ENCODE measurements at regions of chr6 and their contacts with region 1.

Region 1: GRCh38 chr6:37207903-37208456 is 38.0 kb downstream of the PIM1 start:
- H3K4me3 ChIP-seq: no peak overlapping the region
- H3K27ac ChIP-seq: no peak overlapping the region
- H3K4me1 ChIP-seq: peaks cover 2% of the 10 kb centered on the region
- CTCF ChIP-seq: peak; percentile 85

Region 2: GRCh38 chr6:36885461-36886401 is 322.2 kb before region 1 on chr6 and contains the start of gene C6orf89:
- CTCF ChIA-PET with region 1: interaction called, 22 read pairs
- POLR2A ChIA-PET with region 1: no interaction called
- H3K4me3 ChIP-seq: peak within 1 kb of the TSS; percentile 81
- H3K27ac ChIP-seq: peak within 1 kb of the TSS; percentile 66
- H3K4me1 ChIP-seq: peaks cover 3% of the 10 kb centered on the region; the same call in 1 of the 2 replicates
- CTCF ChIP-seq: peak; percentile 92

Region 3: DNA sequence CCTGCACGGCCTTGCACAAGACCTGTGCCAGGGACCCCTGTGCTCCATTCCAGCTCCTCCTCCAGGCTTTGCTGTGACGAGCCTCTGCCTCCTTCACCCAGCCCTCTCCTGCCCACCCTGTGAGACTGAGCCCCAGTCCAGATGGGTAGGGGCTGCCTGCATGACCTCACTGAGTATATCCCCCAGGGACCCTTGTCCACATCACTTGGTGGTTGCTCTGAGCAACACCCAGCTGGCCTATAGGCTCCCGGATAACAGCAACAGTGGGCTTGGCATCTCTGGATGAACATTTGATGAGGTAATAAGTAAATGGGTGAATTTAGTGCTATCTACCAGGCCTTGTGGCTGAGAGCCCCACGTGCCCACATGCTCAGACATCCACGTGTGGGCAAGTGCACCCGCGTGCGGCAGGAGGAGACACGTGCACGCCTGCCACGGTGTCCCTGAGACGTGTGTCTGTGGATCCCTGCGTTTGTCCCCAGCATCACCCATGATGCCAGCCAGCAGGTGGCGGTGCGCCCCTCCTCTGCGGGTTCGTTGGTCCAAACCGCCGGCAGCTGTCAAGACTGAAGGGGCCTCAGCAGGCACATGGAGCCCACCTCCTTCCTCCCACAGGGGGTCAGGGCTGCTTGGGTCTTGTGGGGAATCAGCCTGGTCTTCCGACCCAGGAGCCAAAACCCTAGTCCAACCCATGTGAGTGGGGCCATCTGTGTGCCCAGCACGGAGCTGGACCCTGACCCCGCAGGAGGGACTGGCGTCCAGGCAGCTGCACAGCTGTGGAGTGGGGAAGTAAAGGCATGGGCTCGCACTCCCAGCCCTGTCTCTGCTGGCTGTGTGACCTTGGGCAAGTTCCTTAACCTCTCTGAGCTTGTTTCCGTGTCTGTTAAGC is 156.6 kb before region 1 on chr6:
- CTCF ChIA-PET with region 1: interaction called, 207 read pairs
- POLR2A ChIA-PET with region 1: interaction called, 3 read pairs
- H3K4me3 ChIP-seq: no peak overlapping the region
- H3K27ac ChIP-seq: no peak overlapping the region
- H3K4me1 ChIP-seq: no peaks in the 10 kb centered on the region
- CTCF ChIP-seq: peak; percentile 97

Region 4: DNA sequence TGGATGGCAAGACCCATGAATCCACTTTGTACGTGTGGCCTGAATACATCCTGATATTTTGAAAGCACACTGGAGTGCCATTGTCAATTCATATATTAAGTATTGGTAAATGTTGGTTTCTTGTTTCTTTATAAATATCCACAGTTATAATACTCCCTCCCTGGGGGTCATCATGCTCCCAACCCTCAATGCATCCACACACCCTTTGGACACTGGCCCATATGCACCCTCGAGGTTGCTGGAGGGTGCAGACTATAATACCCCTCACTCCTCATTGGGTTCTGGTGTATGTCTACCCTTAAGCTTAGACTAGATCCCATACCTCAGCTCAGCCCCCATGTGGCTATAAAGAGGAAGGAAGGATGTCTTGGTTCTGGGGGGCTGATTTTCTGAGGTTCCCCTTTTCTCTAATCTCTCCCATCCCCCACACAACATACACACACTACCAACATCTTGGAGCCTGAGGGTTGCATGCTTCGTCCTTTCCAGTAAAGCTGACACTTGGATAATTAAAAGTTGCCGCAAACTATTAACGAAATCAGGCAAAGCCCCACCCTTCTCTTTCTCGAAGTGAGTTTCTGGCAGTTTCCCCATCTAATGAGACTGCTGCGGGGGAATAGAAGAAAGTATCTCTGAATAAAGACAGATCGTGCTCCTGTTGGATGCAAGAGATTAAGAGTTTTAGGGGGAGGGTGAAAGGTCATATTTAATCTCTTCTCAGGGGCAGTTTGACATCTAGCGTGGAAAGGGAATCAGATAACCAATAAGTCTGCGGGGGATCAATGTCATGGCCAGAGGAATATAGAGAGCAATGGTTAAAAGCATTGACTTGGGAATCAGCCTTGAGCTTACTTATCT is 30.7 kb before region 1 on chr6:
- CTCF ChIA-PET with region 1: interaction called, 70 read pairs
- POLR2A ChIA-PET with region 1: interaction called, 13 read pairs
- H3K4me3 ChIP-seq: no peak overlapping the region
- H3K27ac ChIP-seq: no peak overlapping the region
- H3K4me1 ChIP-seq: no peaks in the 10 kb centered on the region
- CTCF ChIP-seq: no peak

Region 5: DNA sequence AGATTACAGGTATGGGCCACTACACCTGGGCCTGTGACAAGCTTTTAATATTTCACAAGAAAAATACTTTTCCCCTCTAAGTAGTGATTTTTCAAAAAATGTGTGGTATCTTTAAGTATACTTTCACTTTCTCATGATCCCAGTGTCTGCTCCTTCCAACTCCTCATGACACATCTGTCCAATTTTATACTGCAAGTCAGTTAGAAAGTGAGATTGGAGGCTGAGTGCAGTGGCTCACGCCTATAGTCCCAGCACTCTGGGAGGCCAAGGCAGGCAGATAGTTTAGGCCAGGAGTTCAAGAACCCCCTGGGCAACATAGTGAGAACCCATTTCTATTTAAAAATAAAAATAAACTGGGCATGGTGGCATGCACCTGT is 17.8 kb before region 1 on chr6:
- CTCF ChIA-PET with region 1: interaction called, 11 read pairs
- POLR2A ChIA-PET with region 1: no interaction called
- H3K4me3 ChIP-seq: no peak overlapping the region
- H3K27ac ChIP-seq: no peak overlapping the region
- H3K4me1 ChIP-seq: no peaks in the 10 kb centered on the region
- CTCF ChIP-seq: no peak

Region 6: GRCh38 chr6:37239950-37240713 is 32.2 kb after region 1 on chr6:
- CTCF ChIA-PET with region 1: interaction called, 11 read pairs
- POLR2A ChIA-PET with region 1: no interaction called
- H3K4me3 ChIP-seq: no peak overlapping the region
- H3K27ac ChIP-seq: peak overlapping the region; percentile 1; the same call in 1 of the 2 replicates
- H3K4me1 ChIP-seq: peaks cover 6% of the 10 kb centered on the region
- CTCF ChIP-seq: no peak

Region 7: GRCh38 chr6:37314487-37315156 is 106.6 kb after region 1 on chr6:
- CTCF ChIA-PET with region 1: interaction called, 31 read pairs
- POLR2A ChIA-PET with region 1: no interaction called
- H3K4me3 ChIP-seq: no peak overlapping the region
- H3K27ac ChIP-seq: no peak overlapping the region
- H3K4me1 ChIP-seq: no peaks in the 10 kb centered on the region
- CTCF ChIP-seq: peak; percentile 52